ENCODE measurements at regions of chr15 and their contacts with region 1.

Region 1: GRCh38 chr15:89750560-89751542 is at the start of gene MESP1:
- DNase-seq: peak; percentile 96
- H3K4me3 ChIP-seq: peak within 1 kb of the TSS; percentile 44 to 84 (median 62)
- H3K27ac ChIP-seq: peak within 1 kb of the TSS; percentile 71 to 86 (median 75)
- H3K4me1 ChIP-seq: peaks cover 0 to 36% (median 33%) of the 10 kb centered on the region in 4 donors
- H3K27me3 ChIP-seq: peaks cover 0 to 3% (median 0%) of the 10 kb centered on the region in 3 donors
- CTCF ChIP-seq: peak; percentile 62 to 89 (median 82)
- EP300 ChIP-seq: no peak
- POLR2A ChIP-seq: no peak
- total RNA-seq, gene MESP1: 2.7 to 8.4 (median 3.3) TPM

Region 2: GRCh38 chr15:89647191-89647851 is 103.5 kb before region 1 on chr15:
- intact Hi-C with region 1: loop called (anchors 2 kb)
- DNase-seq: peak; percentile 87
- H3K4me3 ChIP-seq: no peak overlapping the region
- H3K27ac ChIP-seq: no peak overlapping the region
- H3K4me1 ChIP-seq: peaks cover 0 to 4% (median 2%) of the 10 kb centered on the region in 4 donors
- H3K27me3 ChIP-seq: no peaks in the 10 kb centered on the region
- CTCF ChIP-seq: peak; percentile 55 to 86 (median 80)
- EP300 ChIP-seq: no peak
- POLR2A ChIP-seq: no peak

Measured in sigmoid colon (tissue), 7 donors.